Posterior vena cava (tissue), 2 donors: ENCODE measurements at regions of chrX and their contacts with region 1.

Region 1: DNA sequence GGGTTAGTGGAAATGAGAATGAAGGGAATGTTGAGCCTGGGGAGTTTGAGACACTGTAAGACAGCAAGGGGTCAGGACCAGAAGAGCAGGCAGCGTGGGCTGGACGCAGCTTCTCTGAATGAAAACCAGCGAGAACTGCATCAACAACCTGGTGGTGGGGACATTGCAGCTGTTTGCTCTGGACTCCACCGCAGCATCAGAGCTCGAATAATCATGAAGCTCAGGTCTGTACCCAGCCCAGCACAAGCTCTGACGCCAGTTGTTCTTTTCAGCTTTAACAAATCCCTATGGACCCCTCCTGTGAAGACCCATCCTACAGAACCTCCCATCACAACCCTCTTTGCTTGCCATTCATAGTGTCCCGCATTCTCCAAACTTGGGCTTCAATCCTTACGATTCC is 106.8 kb upstream of the PNPLA4 start:
- DNase-seq: no peak

Region 2: GRCh38 chrX:8049827-8050226 is 15.8 kb after region 1 on chrX:
- intact Hi-C with region 1: loop called in 1 of 2 experiments (anchors 1 kb)
- DNase-seq: no peak